ENCODE measurements at regions of chr2 and their contacts with region 1.

Region 1: DNA sequence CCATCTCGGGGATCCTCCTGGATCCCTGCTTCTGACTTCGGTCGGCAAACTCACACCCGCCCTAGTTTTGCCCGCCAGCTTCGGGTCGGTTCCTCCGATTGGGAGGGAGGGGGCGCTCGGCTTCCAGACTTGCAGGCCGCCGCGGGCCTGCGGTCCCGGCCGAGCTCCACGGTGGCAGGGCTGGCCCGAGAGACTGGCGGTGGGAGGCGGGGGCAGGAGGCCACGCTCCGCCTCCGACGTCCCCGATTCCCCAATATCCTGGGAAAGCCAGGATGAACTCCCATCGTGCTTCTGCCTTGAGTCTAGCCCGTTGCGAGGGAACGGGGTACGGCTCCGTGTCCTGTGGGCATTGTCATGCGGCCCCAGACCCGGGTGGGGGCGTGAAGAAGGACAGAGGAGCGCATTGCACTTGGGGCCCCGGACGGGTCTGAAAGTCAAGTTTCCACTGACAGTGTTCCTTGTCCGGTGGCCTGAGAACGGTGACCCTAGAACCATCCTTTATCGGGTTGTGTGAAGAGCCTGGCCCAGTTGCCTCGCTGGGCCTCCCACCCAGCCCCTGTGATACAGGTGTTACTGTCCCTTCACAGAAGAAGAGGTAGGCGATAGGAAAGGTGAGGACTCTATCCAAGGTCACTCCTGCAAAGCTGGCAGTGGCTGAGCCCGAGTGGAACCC is 2.4 kb upstream of the INHBB start:
- DNase-seq: peak; percentile 71 to 89
- H3K4me3 ChIP-seq: peak overlapping the region in 3 of 4 experiments; percentile 9 to 57 (median 11); a peak in 3 of 8 replicates
- H3K27ac ChIP-seq: no peak overlapping the region
- H3K4me1 ChIP-seq: peaks cover 5 to 28% (median 13%) of the 10 kb centered on the region in 4 experiments
- H3K27me3 ChIP-seq: peaks cover 45 to 76% (median 67%) of the 10 kb centered on the region in 4 experiments
- CTCF ChIP-seq: peak in 2 of 3 experiments; percentile 91 to 97; a peak in 3 of 4 replicates
- EP300 ChIP-seq: 0 out of 3 replicates have a peak, but pooled peaks of 1 of the 2 experiments have one; percentile 27
- POLR2A ChIP-seq: no peak
- RAD21 ChIP-seq: peak; percentile 98 to 99

Region 2: DNA sequence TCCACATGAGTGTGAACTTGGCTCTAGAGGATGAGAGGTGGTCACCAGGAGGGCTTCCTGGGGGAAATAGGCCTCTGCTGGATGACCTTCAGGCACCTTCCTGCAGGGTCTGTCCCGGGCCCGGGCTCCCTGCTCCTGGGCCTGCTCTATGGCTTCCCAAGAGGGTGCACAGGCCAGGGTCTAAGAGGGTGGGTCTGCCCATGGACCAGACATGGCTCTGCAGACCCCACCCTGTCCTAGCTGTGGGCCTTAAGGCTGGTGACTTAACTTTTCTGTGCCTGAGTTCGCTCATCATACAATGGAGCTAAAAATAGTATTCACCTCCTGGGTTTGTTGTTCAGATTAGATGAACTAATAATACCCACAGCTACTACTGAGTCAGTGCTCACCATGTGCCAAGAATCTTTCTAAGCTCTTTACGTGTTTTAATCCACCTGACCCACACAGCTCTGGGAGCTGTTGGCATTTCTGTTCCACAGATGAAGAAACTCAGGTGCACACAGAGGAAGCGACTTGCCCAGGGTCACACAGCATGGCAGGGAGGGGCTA is 16.8 kb after region 1 on chr2:
- CTCF ChIA-PET with region 1: interaction called, 10 read pairs
- POLR2A ChIA-PET with region 1: interaction called, 3 read pairs
- DNase-seq: no peak
- H3K4me3 ChIP-seq: no peak overlapping the region
- H3K27ac ChIP-seq: no peak overlapping the region
- H3K4me1 ChIP-seq: peaks cover 0 to 2% (median 0%) of the 10 kb centered on the region in 4 experiments; a peak in 2 of 7 replicates
- H3K27me3 ChIP-seq: peaks cover 0 to 6% (median 2%) of the 10 kb centered on the region in 4 experiments; a peak in 3 of 7 replicates
- CTCF ChIP-seq: no peak
- EP300 ChIP-seq: no peak
- POLR2A ChIP-seq: no peak
- RAD21 ChIP-seq: no peak

Region 3: GRCh38 chr2:120436885-120437603 is 93.5 kb after region 1 on chr2:
- CTCF ChIA-PET with region 1: interaction called, 118 read pairs
- POLR2A ChIA-PET with region 1: interaction called, 4 read pairs
- DNase-seq: peak; percentile 53 to 88
- H3K4me3 ChIP-seq: no peak overlapping the region
- H3K27ac ChIP-seq: no peak overlapping the region
- H3K4me1 ChIP-seq: peaks cover 0 to 30% (median 16%) of the 10 kb centered on the region in 4 experiments; a peak in 6 of 7 replicates
- H3K27me3 ChIP-seq: peaks cover 4 to 64% (median 51%) of the 10 kb centered on the region in 4 experiments
- CTCF ChIP-seq: peak in 2 of 3 experiments; percentile 94 to 95; a peak in 3 of 4 replicates
- EP300 ChIP-seq: no peak
- POLR2A ChIP-seq: no peak
- RAD21 ChIP-seq: peak; percentile 80 to 82

Region 4: DNA sequence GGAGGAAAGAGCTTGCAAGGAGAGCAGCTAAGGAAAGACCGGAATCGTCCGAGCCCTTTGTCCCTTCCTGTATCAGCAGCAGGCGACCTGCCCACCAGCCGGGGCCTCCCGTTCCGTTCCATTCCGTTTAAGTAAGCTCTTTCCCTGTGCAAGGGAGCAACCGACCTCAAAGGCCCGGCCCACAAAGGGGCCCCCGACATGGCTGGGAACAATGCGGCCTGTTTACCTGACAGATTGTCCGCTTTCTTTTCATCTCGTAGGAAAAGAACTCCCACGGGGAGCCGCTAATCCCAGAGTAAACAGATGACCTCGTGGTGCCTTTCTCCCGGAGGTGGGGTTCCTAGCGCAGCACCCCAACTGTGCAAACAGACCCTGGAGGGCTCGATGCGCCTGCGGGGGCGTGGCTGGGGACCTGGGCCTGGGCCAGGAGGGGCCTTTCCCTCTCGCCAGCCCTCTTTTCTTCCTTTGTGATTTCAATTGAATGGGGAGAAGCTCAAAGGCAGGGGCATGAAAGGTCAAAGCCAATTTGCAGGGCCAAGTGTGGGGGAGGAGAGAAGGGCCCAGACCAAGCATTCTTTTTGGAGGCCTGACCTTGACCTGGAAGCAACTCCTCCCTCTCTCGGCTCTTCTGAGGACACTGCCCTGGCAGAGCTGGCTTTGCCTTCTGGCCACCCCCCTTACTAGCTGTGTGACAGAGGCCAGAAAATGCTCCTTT is 122.6 kb after region 1 on chr2:
- CTCF ChIA-PET with region 1: interaction called, 13 read pairs
- POLR2A ChIA-PET with region 1: no interaction called
- DNase-seq: peak; percentile 84 to 89
- H3K4me3 ChIP-seq: peak overlapping the region in 2 of 4 experiments; percentile 14 to 30; a peak in 3 of 8 replicates
- H3K27ac ChIP-seq: no peak overlapping the region
- H3K4me1 ChIP-seq: peaks cover 5 to 13% (median 8%) of the 10 kb centered on the region in 4 experiments
- H3K27me3 ChIP-seq: peaks cover 90 to 98% (median 95%) of the 10 kb centered on the region in 4 experiments
- CTCF ChIP-seq: no peak
- EP300 ChIP-seq: peak in 1 of 2 experiments; percentile 60; a peak in 1 of 3 replicates
- POLR2A ChIP-seq: no peak
- RAD21 ChIP-seq: no peak

Measured in H1 (cell line).